Activated naive CD4-positive, alpha-beta T cell treated with anti-CD3 and anti-CD28 coated beads, Interleukin-2, amount 10 ng/mL, durations not matched to agents 7 days and 5 days (primary cell): ENCODE measurements at regions of chr3 and their contacts with region 1.

Region 1: DNA sequence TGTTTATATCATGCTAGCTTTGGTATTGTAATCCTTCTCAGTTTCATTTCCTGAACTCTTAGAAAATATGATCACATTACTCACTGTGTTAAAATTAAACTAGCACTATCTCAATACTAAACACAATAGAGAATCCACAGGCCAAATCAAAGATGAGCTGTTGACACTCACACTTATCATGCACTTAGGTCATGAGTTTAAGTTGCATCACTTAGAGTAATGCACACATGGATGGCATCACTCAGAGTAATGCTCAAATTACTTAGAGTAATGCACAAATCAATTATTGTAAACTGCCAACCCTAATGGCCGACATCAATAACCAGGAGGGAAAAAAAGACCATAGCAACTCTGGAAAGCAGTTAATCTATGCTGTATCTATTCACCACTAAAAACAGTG is 40.0 kb upstream of the MCF2L2 start:
- DNase-seq: no peak
- H3K4me3 Mint-ChIP-seq: no peak overlapping the region
- H3K27ac Mint-ChIP-seq: no peak overlapping the region
- H3K4me1 Mint-ChIP-seq: peaks cover 17% of the 10 kb centered on the region
- H3K27me3 Mint-ChIP-seq: peaks cover 10% of the 10 kb centered on the region

Region 2: GRCh38 chr3:183349421-183350157 is 118.8 kb before region 1 on chr3:
- CTCF ChIA-PET with region 1: no interaction called
- DNase-seq: no peak
- H3K4me3 Mint-ChIP-seq: no peak overlapping the region
- H3K27ac Mint-ChIP-seq: no peak overlapping the region
- H3K4me1 Mint-ChIP-seq: peaks cover 18% of the 10 kb centered on the region
- H3K27me3 Mint-ChIP-seq: peaks cover 14% of the 10 kb centered on the region

Region 3: GRCh38 chr3:183560607-183561006 is 92.2 kb after region 1 on chr3:
- CTCF ChIA-PET with region 1: interaction called, 18 read pairs
- DNase-seq: peak; percentile 60
- H3K4me3 Mint-ChIP-seq: no peak overlapping the region
- H3K27ac Mint-ChIP-seq: no peak overlapping the region
- H3K4me1 Mint-ChIP-seq: peaks cover 32% of the 10 kb centered on the region
- H3K27me3 Mint-ChIP-seq: peaks cover 4% of the 10 kb centered on the region

Region 4: DNA sequence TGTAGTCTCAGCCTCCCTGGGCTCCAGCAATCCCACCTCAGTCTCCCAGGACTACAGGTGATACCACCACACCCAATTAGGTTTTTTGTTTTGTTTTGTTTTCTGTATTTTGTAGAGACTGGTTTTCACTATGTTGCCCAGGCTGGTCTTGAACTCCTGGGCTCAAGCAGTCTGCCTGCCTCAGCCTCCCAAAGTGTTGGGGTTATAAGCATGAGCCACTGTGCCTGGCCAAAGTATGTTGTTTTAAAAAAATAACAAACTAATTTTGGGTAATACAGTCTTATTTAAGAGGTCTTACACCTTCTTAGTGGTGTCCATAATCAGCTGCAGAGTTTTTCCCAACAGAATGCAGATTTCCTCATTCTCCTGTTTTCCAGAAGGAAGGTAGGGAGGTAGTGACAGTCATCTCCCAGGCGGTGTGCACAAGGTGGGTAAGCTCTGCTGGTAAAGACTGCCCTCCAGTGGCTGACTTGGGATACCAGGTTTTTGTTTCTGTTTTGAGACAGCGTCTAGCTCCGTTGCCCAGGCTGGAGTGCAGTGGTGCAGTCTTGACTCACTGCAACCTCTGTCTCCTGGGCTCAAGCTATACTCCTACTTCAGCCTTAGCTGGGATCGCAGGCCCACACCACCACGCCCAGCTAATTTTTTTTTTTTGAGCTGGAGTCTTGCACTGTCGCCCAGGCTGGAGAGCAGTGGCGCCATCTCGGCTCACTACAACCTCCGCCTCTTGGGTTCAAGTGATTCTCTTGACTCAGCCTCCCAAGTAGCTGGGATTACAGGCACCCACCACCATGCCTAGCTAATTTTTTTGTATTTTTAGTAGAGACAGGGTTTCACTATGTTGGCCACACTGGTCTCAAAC is 298.6 kb after region 1 on chr3:
- CTCF ChIA-PET with region 1: interaction called, 29 read pairs
- DNase-seq: peak; percentile 86
- H3K4me3 Mint-ChIP-seq: no peak overlapping the region
- H3K27ac Mint-ChIP-seq: peak overlapping the region; percentile 14
- H3K4me1 Mint-ChIP-seq: peaks cover 13% of the 10 kb centered on the region
- H3K27me3 Mint-ChIP-seq: no peaks in the 10 kb centered on the region